Gastrocnemius medialis (tissue), 4 donors: ENCODE measurements at regions of chr7 and their contacts with region 1.

Region 1: GRCh38 chr7:47088329-47089067 is 493.4 kb downstream of the TNS3 start:
- DNase-seq: peak; percentile 23 to 67
- ATAC-seq: peak; percentile 84
- H3K4me3 ChIP-seq: no peak overlapping the region
- H3K27ac ChIP-seq: peak overlapping the region; percentile 26 to 66 (median 47)
- H3K4me1 ChIP-seq: peaks cover 10 to 13% of the 10 kb centered on the region in 2 donors
- H3K27me3 ChIP-seq: no peaks in the 10 kb centered on the region
- CTCF ChIP-seq: peak; percentile 78 to 90 (median 84)
- POLR2A ChIP-seq: no peak

Region 2: DNA sequence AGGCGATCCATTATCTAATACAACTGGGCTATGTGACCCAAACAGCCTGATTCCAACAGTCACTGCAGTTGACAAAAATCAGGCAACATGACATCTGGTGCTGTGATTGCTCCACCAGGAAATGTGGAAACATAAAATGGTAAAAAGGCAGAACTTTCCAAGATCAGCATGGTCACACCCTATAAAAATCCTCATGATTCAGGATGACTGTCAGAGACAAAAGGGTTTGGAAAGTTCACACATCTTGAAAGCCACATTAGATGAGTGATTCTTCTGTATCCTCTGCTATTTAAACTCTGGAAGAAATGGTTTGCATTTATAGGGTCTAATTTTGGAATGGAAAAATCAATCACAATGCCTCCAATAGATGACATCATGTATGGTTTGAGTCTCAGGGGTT is 504.8 kb before region 1 on chr7:
- in situ Hi-C with region 1: no loop called
- intact Hi-C with region 1: no loop called
- DNase-seq: peak in 1 of 2 donors; percentile 36
- ATAC-seq: peak; percentile 89 to 94
- H3K4me3 ChIP-seq: no peak overlapping the region
- H3K27ac ChIP-seq: peak overlapping the region in 3 of 4 donors; percentile 24 to 46 (median 30)
- H3K4me1 ChIP-seq: no peaks in the 10 kb centered on the region
- H3K27me3 ChIP-seq: no peaks in the 10 kb centered on the region
- CTCF ChIP-seq: no peak
- POLR2A ChIP-seq: no peak

Region 3: GRCh38 chr7:46705406-46706255 is 382.9 kb before region 1 on chr7:
- in situ Hi-C with region 1: no loop called
- intact Hi-C with region 1: no loop called
- DNase-seq: no peak
- ATAC-seq: no peak
- H3K4me3 ChIP-seq: no peak overlapping the region
- H3K27ac ChIP-seq: no peak overlapping the region
- H3K4me1 ChIP-seq: no peaks in the 10 kb centered on the region
- H3K27me3 ChIP-seq: no peaks in the 10 kb centered on the region
- CTCF ChIP-seq: no peak
- POLR2A ChIP-seq: no peak

Region 4: GRCh38 chr7:46776790-46777189 is 311.7 kb before region 1 on chr7:
- in situ Hi-C with region 1: no loop called
- intact Hi-C with region 1: loop called (anchors 10 kb)
- DNase-seq: no peak
- ATAC-seq: no peak
- H3K4me3 ChIP-seq: no peak overlapping the region
- H3K27ac ChIP-seq: no peak overlapping the region
- H3K4me1 ChIP-seq: peaks cover 18 to 42% of the 10 kb centered on the region in 2 donors
- H3K27me3 ChIP-seq: no peaks in the 10 kb centered on the region
- CTCF ChIP-seq: no peak
- POLR2A ChIP-seq: no peak

Region 5: GRCh38 chr7:46859963-46860475 is 228.5 kb before region 1 on chr7:
- in situ Hi-C with region 1: no loop called
- intact Hi-C with region 1: no loop called
- DNase-seq: peak in 1 of 2 donors; percentile 12
- ATAC-seq: peak in 1 of 2 donors; percentile 42
- H3K4me3 ChIP-seq: no peak overlapping the region
- H3K27ac ChIP-seq: no peak overlapping the region
- H3K4me1 ChIP-seq: no peaks in the 10 kb centered on the region
- H3K27me3 ChIP-seq: no peaks in the 10 kb centered on the region
- CTCF ChIP-seq: no peak
- POLR2A ChIP-seq: no peak

Region 6: DNA sequence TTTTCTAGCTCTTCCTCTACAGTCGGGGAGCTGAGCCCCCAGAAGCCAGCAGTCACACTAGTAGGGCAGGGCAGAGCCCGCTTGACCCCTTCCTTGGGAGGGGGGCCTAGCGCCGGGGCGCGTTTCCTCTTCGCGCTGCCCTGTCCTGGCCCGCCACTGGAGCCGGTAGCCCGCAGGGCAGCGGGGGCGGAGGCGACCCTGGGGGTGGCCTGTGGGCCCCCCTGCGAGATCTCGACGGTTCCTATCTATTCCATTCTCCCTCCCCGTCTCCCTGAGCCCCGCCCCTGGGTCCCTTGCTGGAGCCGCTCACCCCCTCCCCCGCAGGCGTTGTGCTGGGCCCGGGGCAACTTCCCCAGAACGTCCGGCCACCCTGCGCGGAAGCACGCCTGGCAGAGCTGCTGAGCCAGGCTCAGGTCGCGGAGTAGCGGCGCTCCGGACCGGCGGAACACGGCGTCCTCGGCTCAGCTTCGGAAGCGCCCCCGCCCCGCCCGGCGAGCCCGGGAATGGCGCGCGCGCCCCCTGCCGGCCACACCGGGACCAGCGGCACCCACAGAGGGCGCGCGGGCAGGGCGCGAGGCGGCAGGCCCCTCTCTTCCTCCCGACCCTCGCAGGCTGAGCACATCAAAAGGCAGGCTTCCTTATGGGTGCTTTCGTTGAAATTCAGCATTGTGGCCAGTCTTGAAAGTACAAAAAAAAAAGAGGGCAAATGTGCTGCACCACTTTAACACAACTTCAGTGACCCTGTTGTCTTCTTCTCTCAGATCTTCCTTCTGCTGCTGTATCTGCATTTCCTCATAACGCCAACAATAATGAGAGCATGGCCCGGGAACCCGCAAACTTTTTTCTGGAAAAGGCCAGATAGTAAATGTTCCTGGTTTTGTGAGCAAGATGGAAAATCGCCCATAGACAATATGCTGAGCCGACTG is 165.8 kb after region 1 on chr7:
- in situ Hi-C with region 1: no loop called
- intact Hi-C with region 1: loop called (anchors 5 kb)
- DNase-seq: peak; percentile 85
- ATAC-seq: peak; percentile 81 to 83
- H3K4me3 ChIP-seq: peak overlapping the region; percentile 60 to 70 (median 68)
- H3K27ac ChIP-seq: peak overlapping the region; percentile 90 to 96 (median 94)
- H3K4me1 ChIP-seq: peaks cover 16 to 20% of the 10 kb centered on the region in 2 donors
- H3K27me3 ChIP-seq: no peaks in the 10 kb centered on the region
- CTCF ChIP-seq: peak; percentile 79 to 100 (median 97)
- POLR2A ChIP-seq: peak in 1 of 2 donors; percentile 39